Mammary epithelial cell (primary cell): ENCODE measurements at regions of chr1 and their contacts with region 1.

Region 1: DNA sequence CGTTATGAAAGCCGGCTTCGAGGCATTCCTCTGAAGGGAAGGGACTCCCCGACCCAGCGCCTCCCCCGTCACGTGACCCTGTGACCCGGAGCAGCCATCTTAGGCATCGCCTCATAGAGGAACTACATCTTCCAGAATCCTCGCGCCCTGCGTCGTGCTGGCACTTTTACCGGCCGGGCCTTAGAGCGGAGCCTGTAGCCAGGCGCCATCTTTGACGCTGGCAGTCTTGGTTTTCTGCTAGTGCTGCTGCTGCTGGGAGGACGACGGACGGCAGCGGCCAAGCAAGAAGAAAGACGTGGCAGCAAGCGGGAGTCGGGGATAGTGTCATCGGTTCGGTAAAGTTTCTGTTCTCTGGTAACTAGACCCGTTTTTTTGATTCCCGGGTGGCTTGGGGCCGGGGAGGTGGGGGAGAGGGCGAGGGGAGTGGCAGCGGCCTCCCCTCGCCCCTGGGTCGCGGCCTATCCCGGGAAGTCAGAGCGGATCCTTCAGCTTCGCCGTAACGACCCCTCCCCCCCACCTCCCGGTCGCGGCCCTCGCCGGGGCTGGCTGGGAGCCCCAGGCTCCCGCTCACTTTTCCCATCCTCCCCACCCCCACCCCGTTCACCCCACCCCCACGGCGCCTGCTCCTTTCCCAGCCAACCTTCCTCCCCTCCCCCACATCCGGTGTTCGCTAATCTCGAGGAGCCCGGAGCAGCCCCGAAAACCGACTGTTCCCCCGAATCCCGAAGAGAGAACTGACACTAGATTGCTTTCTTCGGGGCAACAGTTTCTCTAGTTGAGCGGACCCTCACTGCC is at the starts of genes ZBED6 and ZC3H11A:
- DNase-seq: peak; percentile 99
- H3K4me3 ChIP-seq: peak within 1 kb of the TSS; percentile 46 to 84 (median 67)
- H3K27ac ChIP-seq: peak within 1 kb of the TSS; percentile 94
- H3K4me1 ChIP-seq: peaks cover 25% of the 10 kb centered on the region
- H3K27me3 ChIP-seq: no peaks in the 10 kb centered on the region
- CTCF ChIP-seq: no peak
- total RNA-seq, gene ZBED6: 28.8 to 32.3 TPM
- total RNA-seq, gene ZC3H11A: 77.7 to 91.5 TPM

Region 2: DNA sequence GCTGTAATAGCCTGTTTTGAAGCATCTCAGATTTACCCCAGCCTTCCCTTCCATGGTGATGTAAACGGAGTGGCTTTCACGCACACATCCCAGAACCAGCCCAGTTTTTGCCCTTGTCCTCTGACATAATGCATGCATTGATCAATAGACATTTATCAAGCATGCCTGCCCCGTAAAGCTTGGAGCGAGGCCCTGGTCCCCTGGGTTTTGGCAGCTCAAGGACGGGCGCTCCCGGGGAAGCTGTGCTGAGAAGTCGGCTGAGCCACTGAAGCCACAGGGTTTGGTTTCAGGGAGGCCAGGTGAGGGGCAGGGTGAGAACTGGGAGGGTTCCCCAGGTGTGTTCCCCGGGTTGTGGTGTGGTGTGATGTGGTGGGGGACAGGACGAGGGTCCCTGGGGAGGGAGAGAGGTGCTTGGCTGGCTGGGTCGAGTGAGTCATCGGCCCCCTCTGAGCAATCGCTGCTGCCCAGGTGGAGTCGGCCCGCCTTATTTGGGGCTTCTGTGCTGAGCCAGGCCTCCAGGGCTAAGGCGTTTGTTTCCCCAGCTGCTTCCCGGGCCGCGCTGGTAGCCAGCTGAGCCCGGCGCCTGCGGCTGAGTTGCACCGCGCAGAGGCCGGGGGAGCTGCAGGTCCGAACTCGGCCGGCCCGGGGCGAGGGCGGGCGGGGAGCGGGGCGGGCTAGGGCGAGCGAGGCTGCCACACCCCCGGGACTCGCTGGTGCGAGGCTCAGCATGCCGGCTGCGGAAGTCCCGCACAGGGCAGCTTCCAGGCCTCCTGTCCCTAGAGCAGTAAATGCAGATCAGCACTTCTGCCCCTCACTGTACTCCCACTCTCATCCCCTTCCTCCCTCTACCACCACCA is 145.4 kb before region 1 on chr1:
- CTCF ChIA-PET with region 1: no interaction called
- dilution Hi-C with region 1: loop called (anchors 5 kb)
- in situ Hi-C with region 1: no loop called
- intact Hi-C with region 1: no loop called
- DNase-seq: peak; percentile 96
- H3K4me3 ChIP-seq: peak overlapping the region in 1 of 3 experiments; percentile 32
- H3K27ac ChIP-seq: peak overlapping the region; percentile 94
- H3K4me1 ChIP-seq: peaks cover 35% of the 10 kb centered on the region
- H3K27me3 ChIP-seq: no peaks in the 10 kb centered on the region
- CTCF ChIP-seq: no peak

Region 3: GRCh38 chr1:203702130-203702577 is 93.5 kb before region 1 on chr1:
- CTCF ChIA-PET with region 1: no interaction called
- dilution Hi-C with region 1: no loop called
- in situ Hi-C with region 1: loop called in 1 of 2 experiments (anchors 10 kb)
- intact Hi-C with region 1: loop called (anchors 1 kb)
- DNase-seq: peak; percentile 37
- H3K4me3 ChIP-seq: no peak overlapping the region
- H3K27ac ChIP-seq: no peak overlapping the region
- H3K4me1 ChIP-seq: peaks cover 18% of the 10 kb centered on the region
- H3K27me3 ChIP-seq: no peaks in the 10 kb centered on the region
- CTCF ChIP-seq: peak; percentile 79 to 80

Region 4: DNA sequence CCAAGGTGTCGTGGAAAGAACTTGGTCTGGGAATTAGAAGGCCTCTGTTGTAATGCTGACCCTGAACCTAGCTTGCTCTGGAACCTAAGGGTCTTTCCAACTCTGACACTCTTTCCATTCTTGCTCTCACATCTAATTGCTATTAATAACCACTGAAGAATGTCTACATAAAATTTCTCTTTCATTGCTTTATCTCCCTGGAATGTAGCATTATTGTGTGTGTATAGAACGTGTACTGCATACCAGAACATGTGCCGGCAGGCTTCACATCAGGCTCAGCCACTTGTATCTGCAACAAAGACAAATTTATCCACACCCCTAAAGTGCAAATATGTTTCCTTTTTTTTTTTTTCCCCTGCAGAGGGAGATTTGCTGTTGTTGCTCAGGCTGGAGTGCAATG is 44.6 kb before region 1 on chr1:
- CTCF ChIA-PET with region 1: no interaction called
- dilution Hi-C with region 1: no loop called
- in situ Hi-C with region 1: no loop called
- intact Hi-C with region 1: loop called (anchors 1 kb)
- DNase-seq: peak; percentile 88
- H3K4me3 ChIP-seq: no peak overlapping the region
- H3K27ac ChIP-seq: peak overlapping the region; percentile 84
- H3K4me1 ChIP-seq: peaks cover 35% of the 10 kb centered on the region
- H3K27me3 ChIP-seq: no peaks in the 10 kb centered on the region
- CTCF ChIP-seq: peak in 1 of 2 donors; percentile 22